Activated CD4-positive, alpha-beta memory T cell treated with anti-CD3 and anti-CD28 coated beads, Interleukin-2, amount 10 ng/mL, durations not matched to agents 7 days and 5 days (primary cell): ENCODE measurements at regions of chr3 and their contacts with region 1.

Region 1: DNA sequence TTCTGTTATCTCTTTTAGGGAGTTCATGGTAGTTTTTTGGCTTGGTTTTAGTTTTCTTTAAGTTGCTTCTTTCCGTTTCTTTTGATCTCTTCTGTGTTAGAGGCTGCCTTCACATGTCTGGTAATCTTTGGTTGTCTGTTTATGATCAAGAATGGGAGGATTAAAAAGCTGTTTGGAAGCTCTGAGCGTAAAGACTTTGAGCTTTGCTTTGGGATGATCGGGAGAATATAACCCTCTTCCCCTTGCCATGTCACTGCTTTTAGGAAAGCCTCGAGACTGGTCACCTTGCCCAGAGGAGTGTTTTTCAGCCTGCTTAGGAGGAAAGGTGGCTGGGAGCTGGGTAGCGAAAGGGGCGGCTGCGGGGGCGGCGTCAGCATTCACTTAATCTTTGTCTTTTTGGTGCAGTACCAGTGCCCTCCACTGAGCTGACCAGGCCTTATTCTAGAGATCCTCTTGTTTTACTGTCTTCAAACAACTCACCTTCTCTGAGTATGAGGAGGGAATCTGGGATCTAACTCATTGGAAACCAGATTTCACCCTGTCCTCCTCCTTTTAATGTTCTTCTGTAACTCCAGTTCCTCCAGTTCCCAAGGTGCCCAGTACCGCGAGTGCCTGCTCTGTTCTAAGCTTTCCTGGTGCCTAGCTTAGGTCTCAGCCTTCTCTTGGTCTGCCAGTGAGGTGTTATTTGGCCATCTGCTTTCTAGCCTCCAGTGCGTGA is 15.5 kb downstream of the TATDN2 start:
- DNase-seq: peak; percentile 72
- H3K4me3 Mint-ChIP-seq: peak overlapping the region; percentile 52
- H3K27ac Mint-ChIP-seq: peak overlapping the region; percentile 59
- H3K4me1 Mint-ChIP-seq: peaks cover 72% of the 10 kb centered on the region
- H3K27me3 Mint-ChIP-seq: no peaks in the 10 kb centered on the region

Region 2: DNA sequence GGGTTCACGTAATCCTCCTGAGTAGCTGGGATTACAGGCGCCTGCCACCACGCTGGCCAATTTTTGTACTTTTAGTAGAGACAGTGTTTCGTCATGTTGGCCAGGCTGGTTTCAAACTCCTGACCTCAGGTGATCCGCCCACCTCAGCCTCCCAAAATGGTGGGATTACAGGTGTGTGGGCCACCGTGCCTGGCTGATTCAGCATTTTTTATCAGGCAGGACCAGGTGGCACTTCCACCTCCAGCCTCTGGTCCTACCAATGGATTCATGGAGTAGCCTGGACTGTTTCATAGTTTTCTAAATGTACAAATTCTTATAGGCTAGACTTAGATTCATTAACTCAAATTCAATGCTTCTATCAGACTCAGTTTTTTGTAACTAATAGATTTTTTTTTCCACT is 112.8 kb before region 1 on chr3:
- CTCF ChIA-PET with region 1: interaction called, 11 read pairs
- POLR2A ChIA-PET with region 1: no interaction called
- DNase-seq: no peak
- H3K4me3 Mint-ChIP-seq: no peak overlapping the region
- H3K27ac Mint-ChIP-seq: no peak overlapping the region
- H3K4me1 Mint-ChIP-seq: peaks cover 9% of the 10 kb centered on the region
- H3K27me3 Mint-ChIP-seq: no peaks in the 10 kb centered on the region

Region 3: DNA sequence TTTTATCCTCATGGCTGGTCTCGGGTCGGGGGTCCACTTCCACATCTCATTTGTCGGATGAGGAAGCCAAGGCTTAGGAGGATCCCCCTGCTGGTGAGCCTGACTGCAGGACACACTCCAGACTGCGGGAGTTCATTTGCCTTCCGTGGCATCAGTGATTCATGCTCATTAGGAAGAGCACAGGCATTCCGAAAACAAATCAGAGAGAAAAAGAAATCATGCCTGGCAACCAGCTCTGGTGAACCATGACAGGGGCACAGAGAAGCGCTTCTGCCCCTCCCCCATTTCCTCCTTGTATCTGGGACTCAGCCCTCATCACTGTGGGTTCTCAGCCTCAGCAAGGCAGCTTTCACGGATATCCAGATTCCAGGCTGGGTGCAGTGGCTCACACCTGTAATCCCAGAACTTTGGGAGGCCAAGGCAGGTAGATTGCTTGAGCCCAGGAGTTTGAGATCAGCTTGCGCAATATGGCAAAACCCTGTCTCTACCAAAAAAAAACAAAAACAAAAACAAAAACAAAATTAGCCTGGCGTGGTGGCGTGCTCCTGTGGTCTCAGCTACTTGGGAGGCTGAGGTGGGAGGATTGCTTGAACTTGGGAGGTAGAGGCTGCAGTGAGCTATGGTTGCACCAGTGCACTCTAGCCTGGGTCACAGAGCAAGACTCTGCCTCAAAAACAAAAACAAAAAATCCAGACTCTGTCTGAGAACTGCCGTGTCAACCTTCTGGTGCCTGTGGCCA is 70.7 kb before region 1 on chr3:
- CTCF ChIA-PET with region 1: interaction called, 11 read pairs
- POLR2A ChIA-PET with region 1: interaction called, 4 read pairs
- DNase-seq: peak; percentile 69
- H3K4me3 Mint-ChIP-seq: peak overlapping the region; percentile 7
- H3K27ac Mint-ChIP-seq: peak overlapping the region; percentile 98
- H3K4me1 Mint-ChIP-seq: peaks cover 82% of the 10 kb centered on the region
- H3K27me3 Mint-ChIP-seq: no peaks in the 10 kb centered on the region

Region 4: GRCh38 chr3:10242182-10243065 is 21.4 kb before region 1 on chr3:
- CTCF ChIA-PET with region 1: interaction called, 12 read pairs
- POLR2A ChIA-PET with region 1: interaction called, 13 read pairs
- DNase-seq: peak; percentile 89
- H3K4me3 Mint-ChIP-seq: peak overlapping the region; percentile 39
- H3K27ac Mint-ChIP-seq: peak overlapping the region; percentile 95
- H3K4me1 Mint-ChIP-seq: peaks cover 62% of the 10 kb centered on the region
- H3K27me3 Mint-ChIP-seq: no peaks in the 10 kb centered on the region

Region 5: DNA sequence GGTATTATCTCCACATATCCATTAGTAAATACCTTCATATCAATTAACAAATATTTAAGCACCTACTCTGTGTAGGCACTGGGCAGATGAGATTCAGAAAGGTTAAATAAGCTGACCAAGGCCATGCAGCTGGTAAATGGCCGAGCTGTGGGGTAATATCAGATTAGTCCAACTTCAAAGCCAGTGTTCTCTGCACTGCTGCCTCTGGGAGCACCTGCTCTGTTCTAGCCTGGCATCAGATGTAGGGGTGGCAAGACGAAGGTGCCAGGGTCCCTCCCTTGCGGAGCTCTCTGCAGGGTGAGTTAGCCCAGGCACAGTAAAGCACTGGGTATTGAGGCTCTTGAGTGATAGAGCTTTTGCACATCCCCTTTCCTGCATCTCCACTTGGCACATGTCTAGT is 10.1 kb before region 1 on chr3:
- CTCF ChIA-PET with region 1: interaction called, 27 read pairs
- POLR2A ChIA-PET with region 1: interaction called, 13 read pairs
- DNase-seq: no peak
- H3K4me3 Mint-ChIP-seq: no peak overlapping the region
- H3K27ac Mint-ChIP-seq: no peak overlapping the region
- H3K4me1 Mint-ChIP-seq: peaks cover 74% of the 10 kb centered on the region
- H3K27me3 Mint-ChIP-seq: no peaks in the 10 kb centered on the region

Region 6: GRCh38 chr3:10322352-10322710 is 58.5 kb after region 1 on chr3:
- CTCF ChIA-PET with region 1: interaction called, 20 read pairs
- POLR2A ChIA-PET with region 1: no interaction called
- DNase-seq: peak; percentile 31
- H3K4me3 Mint-ChIP-seq: no peak overlapping the region
- H3K27ac Mint-ChIP-seq: no peak overlapping the region
- H3K4me1 Mint-ChIP-seq: peaks cover 26% of the 10 kb centered on the region
- H3K27me3 Mint-ChIP-seq: peaks cover 18% of the 10 kb centered on the region

Region 7: GRCh38 chr3:10357592-10358308 is 93.9 kb after region 1 on chr3:
- CTCF ChIA-PET with region 1: no interaction called
- POLR2A ChIA-PET with region 1: no interaction called
- DNase-seq: no peak
- H3K4me3 Mint-ChIP-seq: no peak overlapping the region
- H3K27ac Mint-ChIP-seq: no peak overlapping the region
- H3K4me1 Mint-ChIP-seq: peaks cover 2% of the 10 kb centered on the region
- H3K27me3 Mint-ChIP-seq: peaks cover 11% of the 10 kb centered on the region